GM10248 (cell line): ENCODE measurements at regions of chr12 and their contacts with region 1.

Region 1: DNA sequence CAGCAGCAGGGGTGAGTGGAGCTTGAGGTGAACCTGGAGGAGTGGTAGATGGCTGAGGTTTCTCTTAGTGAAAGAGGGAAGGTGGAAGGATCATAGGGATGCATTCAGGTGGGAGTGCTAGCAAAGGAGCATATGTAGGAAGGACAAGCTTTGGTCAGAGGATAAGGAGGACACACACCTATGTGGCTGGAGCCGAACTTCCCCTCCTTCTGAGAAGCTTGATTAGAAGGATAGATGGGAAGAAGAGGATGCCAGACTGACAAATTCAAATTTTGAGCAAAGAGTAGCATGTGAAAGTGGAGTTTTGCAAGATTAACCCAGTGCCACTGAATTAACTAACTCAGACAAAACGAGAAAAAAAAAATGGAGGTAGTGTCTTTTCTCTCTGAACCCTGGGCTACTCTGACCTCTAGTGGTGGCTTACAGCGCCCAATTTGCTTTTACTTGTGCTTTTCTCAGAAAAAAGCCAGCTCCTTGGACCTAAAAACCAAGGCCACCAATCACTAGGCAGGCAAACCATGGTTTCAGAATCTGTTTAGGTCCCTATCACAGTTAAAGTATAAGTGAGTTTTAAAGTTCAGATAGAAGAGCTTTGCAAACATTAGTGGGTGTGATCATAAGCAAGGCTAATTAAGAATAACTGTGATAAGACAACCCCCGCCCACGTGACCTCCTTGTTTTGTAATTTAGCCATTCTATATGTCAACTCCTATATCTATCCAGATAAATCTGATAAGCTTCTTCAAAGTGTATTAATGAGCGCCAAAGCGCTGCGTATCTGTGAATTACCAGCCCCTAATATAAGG is 15.5 kb downstream of the EMP1 start:
- DNase-seq: peak; percentile 50
- CTCF ChIP-seq: peak; percentile 83

Region 2: GRCh38 chr12:12909228-12909994 is 302.7 kb before region 1 on chr12:
- CTCF ChIA-PET with region 1: interaction called, 117 read pairs
- POLR2A ChIA-PET with region 1: no interaction called
- DNase-seq: peak; percentile 38
- CTCF ChIP-seq: no peak

Region 3: DNA sequence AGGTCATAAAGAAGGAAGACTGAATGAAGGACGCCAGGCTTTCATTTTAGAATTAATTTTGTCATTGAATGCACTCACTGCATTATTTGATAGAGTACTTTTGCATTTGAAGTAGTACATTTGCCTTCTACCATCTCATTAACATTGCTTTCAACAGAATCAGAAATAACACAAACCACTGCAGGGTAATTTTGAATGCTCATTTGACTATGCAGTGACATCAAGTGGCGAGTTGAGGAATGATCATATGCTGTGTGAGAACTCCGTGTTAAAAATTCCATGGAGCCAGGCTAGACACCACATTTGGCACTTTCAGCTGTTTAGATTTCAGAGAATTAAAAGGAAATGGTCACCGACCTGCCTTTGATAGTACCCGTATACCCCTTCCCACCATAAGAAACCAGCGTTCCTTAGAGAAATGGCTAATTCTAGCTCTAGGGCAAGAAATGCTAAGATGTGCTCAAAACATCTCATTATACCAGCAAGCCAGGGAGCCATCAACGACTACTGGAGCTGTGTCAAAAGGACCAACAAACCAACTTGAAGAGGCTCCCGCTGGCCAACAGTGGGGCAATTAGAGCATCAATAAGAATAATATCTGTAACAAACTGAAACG is 228.5 kb before region 1 on chr12:
- CTCF ChIA-PET with region 1: interaction called, 23 read pairs
- POLR2A ChIA-PET with region 1: no interaction called
- DNase-seq: no peak
- CTCF ChIP-seq: no peak

Region 4: DNA sequence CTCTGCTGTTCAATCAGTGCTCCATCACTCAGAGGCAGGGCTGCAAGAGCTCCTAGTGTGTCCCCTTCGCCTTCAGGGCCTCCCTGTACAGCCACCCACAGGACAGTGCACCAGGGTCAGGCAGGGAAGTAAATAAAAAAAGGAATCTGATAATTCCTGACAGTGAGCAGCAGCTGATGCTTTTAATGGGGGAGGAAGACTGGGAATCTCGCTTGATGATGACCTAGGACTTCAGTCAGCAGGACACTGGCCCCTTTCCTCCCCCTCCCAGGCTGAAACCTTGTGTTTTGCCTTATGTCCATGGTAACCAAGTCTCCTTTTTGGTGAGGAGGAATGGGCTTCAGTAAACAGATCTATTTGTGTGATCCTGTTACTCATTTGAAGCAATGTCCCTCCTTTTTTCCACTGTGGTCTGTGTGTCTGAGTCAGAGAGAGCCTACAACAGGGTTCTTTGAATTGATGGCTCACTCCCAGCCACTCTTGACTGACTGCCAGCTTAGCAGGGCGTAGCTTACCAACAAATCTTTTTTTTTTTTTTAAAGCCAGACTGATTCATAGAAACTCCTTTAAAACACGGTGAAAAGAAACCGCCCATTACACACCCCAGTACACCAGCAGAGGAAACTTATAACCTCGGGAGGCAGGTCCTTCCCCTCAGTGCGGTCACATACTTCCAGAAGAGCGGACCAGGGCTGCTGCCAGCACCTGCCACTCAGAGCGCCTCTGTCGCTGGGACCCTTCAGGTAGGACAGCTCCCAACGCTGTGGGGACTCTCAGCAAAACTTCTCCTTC is 15.7 kb before region 1 on chr12 and contains the start of gene EMP1:
- CTCF ChIA-PET with region 1: interaction called, 57 read pairs
- POLR2A ChIA-PET with region 1: no interaction called
- DNase-seq: peak; percentile 37
- CTCF ChIP-seq: no peak

Region 5: DNA sequence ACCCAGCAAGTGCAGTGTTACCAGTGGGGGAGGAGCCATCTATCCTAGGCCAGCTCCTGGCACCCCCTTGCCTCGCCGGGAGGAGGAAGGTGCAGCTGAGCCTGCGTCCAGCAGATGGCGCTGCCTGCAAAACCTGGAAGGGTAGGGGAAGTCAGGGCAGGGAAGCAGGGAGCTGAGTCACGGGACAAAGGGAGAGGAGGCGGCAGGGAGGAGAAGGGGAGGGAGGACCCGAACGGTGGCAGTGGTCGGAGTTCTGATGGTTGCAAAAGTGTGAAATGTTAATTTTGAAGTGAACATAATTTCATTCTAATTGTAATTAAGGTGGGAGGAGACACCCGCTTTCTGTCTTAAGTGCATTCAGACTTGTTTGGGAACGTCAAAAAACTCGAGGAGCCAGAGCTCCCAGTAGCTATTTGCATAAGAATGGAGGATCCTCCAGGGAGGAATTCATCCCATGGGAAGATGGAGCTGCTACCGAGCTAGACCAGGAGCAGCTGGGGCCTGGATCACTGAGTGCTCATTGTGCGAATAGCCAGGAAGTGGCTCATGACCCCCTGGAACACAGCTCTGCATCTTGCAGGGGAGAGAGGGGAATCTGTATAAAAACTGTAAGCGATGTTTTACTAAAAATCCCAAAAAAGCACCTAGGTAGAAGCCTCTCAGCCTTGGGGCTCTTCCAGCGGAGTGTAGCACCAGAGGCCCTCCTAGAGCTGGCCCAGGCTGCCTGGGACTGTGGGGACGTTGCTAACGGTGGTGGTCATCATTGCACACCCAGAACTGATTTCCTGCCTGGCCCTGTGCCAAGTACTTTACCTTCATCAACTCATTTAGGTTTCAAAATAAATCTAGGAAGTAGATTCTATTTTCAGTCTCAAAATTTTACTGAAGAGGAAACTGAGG is 44.0 kb after region 1 on chr12:
- CTCF ChIA-PET with region 1: interaction called, 13 read pairs
- POLR2A ChIA-PET with region 1: no interaction called
- DNase-seq: peak; percentile 82
- CTCF ChIP-seq: peak; percentile 99